ENCODE measurements at regions of chr9 and their contacts with region 1.

Region 1: DNA sequence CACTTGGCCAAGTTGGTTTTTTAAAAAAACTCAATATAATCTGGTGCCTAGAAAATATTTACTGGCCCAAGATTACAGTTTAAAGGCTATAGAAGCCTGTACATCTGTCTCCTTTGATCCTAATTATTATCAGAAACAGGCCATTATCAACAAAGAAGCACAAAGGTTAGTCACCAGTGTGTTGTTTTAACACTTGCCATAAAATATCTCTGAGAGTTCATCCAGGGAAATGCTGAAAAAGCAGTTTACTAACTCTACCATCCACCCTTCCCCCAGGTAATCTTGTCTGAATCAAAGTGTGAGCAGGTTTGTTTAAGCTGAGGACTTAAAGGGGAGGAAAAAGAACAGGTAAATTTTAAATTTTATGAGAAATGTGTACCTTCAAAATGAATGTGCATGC is 13.3 kb upstream of the TRPM6 start:
- DNase-seq: no peak
- H3K4me3 ChIP-seq: no peak overlapping the region
- H3K27ac ChIP-seq: no peak overlapping the region
- H3K4me1 ChIP-seq: no peaks in the 10 kb centered on the region
- CTCF ChIP-seq: no peak

Region 2: DNA sequence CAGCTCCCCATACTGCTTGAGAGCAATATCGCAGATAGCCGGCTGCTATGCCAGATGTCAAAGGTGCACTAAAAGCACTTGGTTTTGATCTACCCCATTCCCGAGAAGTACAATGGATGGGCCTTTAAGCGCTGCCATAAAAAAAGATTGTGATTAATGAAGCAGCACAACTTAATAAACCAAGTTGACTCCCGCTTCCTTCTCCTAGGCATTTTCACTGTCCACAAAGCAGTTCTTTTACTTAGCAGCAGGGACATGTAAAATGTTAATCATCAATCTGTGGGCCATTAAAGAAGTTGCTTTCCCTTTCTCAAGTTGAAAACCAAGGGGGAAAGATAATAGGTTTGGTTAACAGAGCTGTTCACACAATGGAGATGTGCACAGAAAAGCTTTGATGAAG is 189.7 kb before region 1 on chr9:
- CTCF ChIA-PET with region 1: no interaction called
- POLR2A ChIA-PET with region 1: interaction called, 10 read pairs
- intact Hi-C with region 1: no loop called
- DNase-seq: no peak
- H3K4me3 ChIP-seq: no peak overlapping the region
- H3K27ac ChIP-seq: no peak overlapping the region
- H3K4me1 ChIP-seq: no peaks in the 10 kb centered on the region
- CTCF ChIP-seq: no peak

Measured in OCI-LY7 (cell line).